SK-N-SH (cell line): ENCODE measurements at regions of chr18 and their contacts with region 1.

Region 1: GRCh38 chr18:72640552-72640951 is 96.4 kb upstream of the CBLN2 start:
- DNase-seq: no peak
- H3K4me3 ChIP-seq: peak overlapping the region; percentile 9 to 20; a peak in 1 of 4 replicates
- H3K27ac ChIP-seq: no peak overlapping the region
- H3K4me1 ChIP-seq: no peaks in the 10 kb centered on the region
- H3K27me3 ChIP-seq: no peaks in the 10 kb centered on the region
- CTCF ChIP-seq: no peak
- EP300 ChIP-seq: no peak
- RAD21 ChIP-seq: no peak

Region 2: DNA sequence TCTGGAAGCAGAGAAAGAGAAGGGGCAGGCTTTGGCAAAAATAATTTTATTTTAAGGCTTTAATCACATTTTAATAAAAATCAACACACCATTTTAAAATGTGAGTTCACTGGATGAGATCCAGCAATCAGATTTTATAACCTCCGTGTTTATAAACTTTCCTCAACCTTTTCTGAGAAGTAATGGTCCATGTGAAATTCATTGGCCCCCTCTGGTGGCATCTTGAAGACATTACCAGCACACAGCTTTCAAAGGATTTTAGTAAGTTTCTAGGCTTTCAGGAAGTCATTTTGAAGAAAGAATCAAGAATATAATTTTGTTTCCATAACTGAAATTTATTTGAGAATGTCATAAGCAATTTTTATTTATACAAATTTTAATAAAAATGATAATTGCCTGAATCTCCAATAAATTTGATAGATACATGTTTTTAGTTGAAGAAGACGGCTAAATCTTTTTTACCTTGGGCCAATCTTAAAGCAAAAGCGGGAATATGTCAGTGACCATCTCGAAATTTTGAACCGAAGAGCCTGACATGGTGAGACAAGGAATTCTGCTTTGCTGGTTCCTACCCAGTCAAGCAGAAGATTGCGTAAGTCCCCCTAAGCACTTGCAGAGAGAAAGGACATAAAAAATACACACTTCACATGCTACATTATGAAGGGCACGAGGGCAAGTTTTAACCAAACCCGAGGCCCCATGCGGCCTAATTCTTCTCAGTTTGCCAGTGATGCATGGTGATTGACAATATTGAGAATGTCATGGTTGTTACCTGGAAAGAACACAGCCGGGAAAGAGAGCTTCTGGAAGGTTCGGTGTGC is 32.0 kb after region 1 on chr18:
- CTCF ChIA-PET with region 1: interaction called, 13 read pairs
- POLR2A ChIA-PET with region 1: no interaction called
- DNase-seq: peak; percentile 60
- H3K4me3 ChIP-seq: peak overlapping the region in 1 of 2 experiments; percentile 46; a peak in 1 of 4 replicates
- H3K27ac ChIP-seq: no peak overlapping the region
- H3K4me1 ChIP-seq: no peaks in the 10 kb centered on the region
- H3K27me3 ChIP-seq: no peaks in the 10 kb centered on the region
- CTCF ChIP-seq: peak; percentile 81
- EP300 ChIP-seq: no peak
- RAD21 ChIP-seq: peak; percentile 78